WTC11 (cell line): ENCODE measurements at regions of chr9 and their contacts with region 1.

Region 1: DNA sequence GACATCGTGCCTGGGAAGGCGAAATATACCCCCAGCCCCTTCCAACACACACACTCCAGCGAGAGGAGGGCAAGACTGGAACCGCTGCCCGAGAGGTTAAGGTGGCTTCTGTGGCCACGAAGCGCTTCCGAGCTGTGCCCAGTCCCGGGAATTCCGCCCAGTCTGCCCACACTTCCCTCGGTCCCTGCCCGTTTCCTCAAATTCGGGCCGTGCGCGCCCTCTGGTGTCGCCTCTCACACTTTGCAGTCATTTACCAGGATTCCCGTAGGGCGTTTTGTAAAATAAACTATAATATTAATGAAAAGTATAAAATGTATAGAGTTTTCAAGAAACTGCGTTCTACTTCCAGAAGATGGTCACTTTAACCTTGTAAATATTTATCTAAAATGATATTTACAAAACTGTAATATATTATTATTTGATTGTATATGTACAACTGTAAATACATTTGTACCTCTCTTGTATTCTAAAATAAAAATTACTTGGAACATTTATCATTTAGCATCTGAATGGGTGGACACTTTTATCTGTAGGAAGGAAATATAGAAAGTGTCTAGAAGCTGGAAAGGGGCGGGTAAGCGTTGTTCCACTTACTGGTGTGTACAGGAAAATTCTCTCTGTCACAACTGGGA is 11.0 kb upstream of the EXOSC2 start:
- DNase-seq: peak; percentile 79
- ATAC-seq: peak; percentile 59
- H3K4me3 Mint-ChIP-seq: peak overlapping the region; percentile 79
- H3K27ac Mint-ChIP-seq: no peak overlapping the region
- H3K4me1 Mint-ChIP-seq: peaks cover 2% of the 10 kb centered on the region; the same call in 1 of the 2 replicates
- H3K27me3 Mint-ChIP-seq: peaks cover 48% of the 10 kb centered on the region
- CTCF ChIP-seq: peak; percentile 69

Region 2: DNA sequence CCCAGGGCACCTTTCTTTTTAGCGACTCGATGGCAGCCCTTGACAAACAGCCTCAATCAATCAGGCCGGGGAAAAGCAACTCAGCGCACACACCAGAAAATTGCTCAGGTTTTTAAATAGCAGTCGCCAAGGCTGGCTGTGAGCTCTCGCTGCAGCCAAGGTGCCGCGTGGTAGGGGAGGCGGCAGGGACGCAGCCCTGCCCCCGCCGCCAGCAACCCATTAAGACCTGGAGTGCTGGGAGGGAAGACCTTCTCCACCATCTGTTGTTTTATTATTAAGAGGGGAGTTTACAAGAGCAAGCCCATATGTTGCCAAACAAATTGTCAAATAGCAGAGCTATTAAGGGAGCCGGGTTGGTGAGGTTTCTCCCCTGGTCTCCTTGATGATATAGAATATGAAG is 215.2 kb before region 1 on chr9:
- CTCF ChIA-PET with region 1: interaction called, 60 read pairs
- POLR2A ChIA-PET with region 1: interaction called, 4 read pairs
- DNase-seq: no peak
- ATAC-seq: peak; percentile 48
- H3K4me3 Mint-ChIP-seq: no peak overlapping the region
- H3K27ac Mint-ChIP-seq: no peak overlapping the region
- H3K4me1 Mint-ChIP-seq: peaks cover 16% of the 10 kb centered on the region
- H3K27me3 Mint-ChIP-seq: no peaks in the 10 kb centered on the region
- CTCF ChIP-seq: no peak

Region 3: DNA sequence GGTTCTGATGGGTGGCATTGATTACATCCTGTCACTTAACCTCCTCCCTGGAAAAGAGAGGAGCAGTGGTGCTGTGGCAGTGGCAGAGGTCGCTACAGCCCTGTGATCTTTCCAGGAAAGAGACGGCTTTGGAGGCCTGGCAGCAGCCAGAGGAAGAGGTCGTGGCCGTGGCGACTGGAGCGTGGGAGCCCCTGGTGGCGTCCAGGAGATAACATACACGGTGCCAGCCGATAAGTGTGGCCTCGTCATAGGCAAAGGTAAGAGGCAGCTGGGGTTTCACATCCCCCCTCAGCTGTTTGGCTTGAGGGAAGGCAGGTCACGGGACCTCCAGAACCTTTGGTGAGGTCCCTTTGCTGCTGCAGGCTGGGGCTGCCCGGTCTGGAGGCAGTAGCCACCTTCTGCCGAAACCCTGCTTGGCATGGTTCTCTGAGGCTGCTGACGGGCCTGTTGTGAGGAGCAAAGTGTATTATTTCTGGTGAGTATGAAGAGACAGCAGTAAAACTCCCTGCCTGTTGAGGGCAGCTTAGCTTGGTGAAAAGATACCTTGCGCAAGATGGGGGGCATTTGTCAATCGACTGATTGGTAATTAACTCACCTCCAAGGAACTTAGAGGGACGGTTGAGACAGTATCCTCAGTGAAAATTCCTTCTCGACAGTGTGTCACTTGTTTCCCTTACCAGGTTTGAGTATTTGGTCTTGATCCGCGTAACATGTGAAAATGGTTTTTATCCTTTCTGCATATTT is 56.2 kb before region 1 on chr9:
- CTCF ChIA-PET with region 1: interaction called, 10 read pairs
- POLR2A ChIA-PET with region 1: no interaction called
- DNase-seq: no peak
- ATAC-seq: no peak
- H3K4me3 Mint-ChIP-seq: no peak overlapping the region
- H3K27ac Mint-ChIP-seq: peak overlapping the region; percentile 76
- H3K4me1 Mint-ChIP-seq: peaks cover 28% of the 10 kb centered on the region
- H3K27me3 Mint-ChIP-seq: no peaks in the 10 kb centered on the region
- CTCF ChIP-seq: no peak

Region 4: GRCh38 chr9:130640681-130641080 is 41.9 kb before region 1 on chr9:
- CTCF ChIA-PET with region 1: interaction called, 14 read pairs
- POLR2A ChIA-PET with region 1: no interaction called
- DNase-seq: peak; percentile 41
- ATAC-seq: peak; percentile 62
- H3K4me3 Mint-ChIP-seq: no peak overlapping the region
- H3K27ac Mint-ChIP-seq: no peak overlapping the region
- H3K4me1 Mint-ChIP-seq: peaks cover 15% of the 10 kb centered on the region
- H3K27me3 Mint-ChIP-seq: no peaks in the 10 kb centered on the region
- CTCF ChIP-seq: no peak

Region 5: GRCh38 chr9:130663258-130663976 is 19.2 kb before region 1 on chr9:
- CTCF ChIA-PET with region 1: interaction called, 39 read pairs
- POLR2A ChIA-PET with region 1: interaction called, 3 read pairs
- DNase-seq: peak; percentile 62
- ATAC-seq: peak; percentile 13; the same call in 1 of the 2 replicates
- H3K4me3 Mint-ChIP-seq: peak overlapping the region; percentile 70
- H3K27ac Mint-ChIP-seq: no peak overlapping the region
- H3K4me1 Mint-ChIP-seq: peaks cover 27% of the 10 kb centered on the region
- H3K27me3 Mint-ChIP-seq: peaks cover 100% of the 10 kb centered on the region
- CTCF ChIP-seq: no peak

Region 6: DNA sequence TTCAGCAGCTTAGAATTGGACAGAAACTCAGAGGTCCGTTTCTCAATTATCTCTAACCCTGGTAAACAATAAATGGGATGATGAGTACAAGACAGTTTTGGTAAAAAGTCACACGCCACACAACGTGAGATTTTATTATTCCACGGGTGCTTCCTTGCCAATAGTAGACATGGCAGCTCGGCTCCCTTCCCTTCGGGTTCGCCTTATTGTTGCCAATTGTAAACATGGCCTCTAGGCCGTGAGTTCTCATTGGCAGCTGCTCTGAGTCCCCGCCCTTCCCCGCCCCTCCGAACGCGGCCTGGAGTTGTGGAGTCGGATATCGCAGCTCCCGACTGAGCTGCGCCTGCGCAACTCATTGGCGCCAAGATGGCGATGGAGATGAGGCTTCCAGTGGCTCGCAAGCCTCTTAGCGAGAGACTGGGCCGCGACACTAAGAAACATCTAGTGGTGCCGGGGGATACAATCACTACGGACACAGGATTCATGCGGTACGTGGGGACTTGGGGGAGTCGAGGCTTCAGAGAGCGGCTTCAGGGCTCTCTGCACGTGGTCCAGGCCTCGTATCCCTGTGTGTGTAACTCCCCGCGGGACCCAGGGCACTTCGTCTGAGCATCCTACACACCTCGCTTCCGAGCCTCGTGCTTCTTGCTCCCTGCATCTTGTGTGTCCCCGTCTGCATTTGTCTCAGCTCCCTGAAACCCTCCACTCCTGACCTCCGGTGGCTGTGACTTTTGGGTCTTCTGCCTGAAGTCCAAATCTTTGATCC is 11.0 kb after region 1 on chr9 and contains the start of gene EXOSC2:
- CTCF ChIA-PET with region 1: interaction called, 40 read pairs
- POLR2A ChIA-PET with region 1: interaction called, 3 read pairs
- DNase-seq: peak; percentile 98
- ATAC-seq: peak; percentile 73
- H3K4me3 Mint-ChIP-seq: peak within 1 kb of the TSS; percentile 98
- H3K27ac Mint-ChIP-seq: peak within 1 kb of the TSS; percentile 94
- H3K4me1 Mint-ChIP-seq: peaks cover 58% of the 10 kb centered on the region
- H3K27me3 Mint-ChIP-seq: no peaks in the 10 kb centered on the region
- CTCF ChIP-seq: no peak
- total RNA-seq, gene EXOSC2: 76.1 to 80.3 TPM (median 79.2 TPM) in 3 replicates